Left cardiac atrium (tissue), 4 donors: ENCODE measurements at regions of chr3 and their contacts with region 1.

Region 1: DNA sequence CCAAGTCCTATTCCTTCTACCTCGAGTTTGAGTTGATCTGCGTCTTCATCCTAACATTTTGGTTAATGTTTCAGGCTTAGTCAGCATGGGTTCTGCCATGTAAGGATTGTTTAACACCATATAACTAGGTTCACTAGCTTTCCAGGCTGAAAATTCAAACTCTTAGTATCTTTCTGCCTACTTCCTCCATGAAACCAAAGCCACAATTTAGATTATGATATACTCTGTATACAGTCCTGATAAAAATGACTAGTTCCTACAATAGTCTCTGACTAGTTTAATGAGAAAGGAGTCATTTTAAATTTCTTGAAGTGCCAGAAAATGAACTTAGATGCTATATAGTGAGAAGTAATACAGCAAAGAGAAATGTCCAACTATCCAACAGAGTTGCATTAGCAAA is 6.6 kb upstream of the BTLA start:
- DNase-seq: no peak
- ATAC-seq: no peak

Region 2: GRCh38 chr3:112132975-112133448 is 372.9 kb before region 1 on chr3 and contains the start of gene GCSAM:
- intact Hi-C with region 1: no loop called
- DNase-seq: peak; percentile 39
- ATAC-seq: peak; percentile 67 to 85
- total RNA-seq, gene GCSAM: 0.08 to 0.35 TPM

Region 3: GRCh38 chr3:112333002-112333380 is 172.9 kb before region 1 on chr3 and contains the start of gene CD200:
- intact Hi-C with region 1: loop called in 1 of 2 experiments (anchors 10 kb)
- DNase-seq: peak; percentile 62
- ATAC-seq: peak; percentile 84 to 85
- total RNA-seq, gene CD200: 5.8 to 6.7 TPM

Region 4: DNA sequence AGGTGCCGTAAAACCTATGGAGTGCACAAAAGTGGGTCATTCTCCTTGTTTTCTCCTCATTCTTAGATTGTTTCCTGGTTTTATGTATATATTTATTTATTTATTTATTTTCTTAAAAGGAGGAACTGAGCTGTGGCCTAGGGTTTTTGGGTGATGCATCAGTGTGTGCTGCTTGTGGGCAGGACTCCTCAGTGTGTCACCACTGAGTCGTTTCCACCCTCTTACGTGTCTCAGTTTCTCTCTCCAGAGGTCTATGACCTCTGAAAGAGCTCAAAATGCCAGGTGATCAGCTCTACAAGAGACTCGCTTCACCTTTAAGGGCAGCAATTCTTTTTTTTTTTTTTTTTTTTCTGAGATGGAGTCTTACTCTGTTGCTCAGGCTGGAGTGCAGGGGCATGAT is 100.1 kb before region 1 on chr3:
- intact Hi-C with region 1: no loop called
- DNase-seq: no peak
- ATAC-seq: no peak

Region 5: DNA sequence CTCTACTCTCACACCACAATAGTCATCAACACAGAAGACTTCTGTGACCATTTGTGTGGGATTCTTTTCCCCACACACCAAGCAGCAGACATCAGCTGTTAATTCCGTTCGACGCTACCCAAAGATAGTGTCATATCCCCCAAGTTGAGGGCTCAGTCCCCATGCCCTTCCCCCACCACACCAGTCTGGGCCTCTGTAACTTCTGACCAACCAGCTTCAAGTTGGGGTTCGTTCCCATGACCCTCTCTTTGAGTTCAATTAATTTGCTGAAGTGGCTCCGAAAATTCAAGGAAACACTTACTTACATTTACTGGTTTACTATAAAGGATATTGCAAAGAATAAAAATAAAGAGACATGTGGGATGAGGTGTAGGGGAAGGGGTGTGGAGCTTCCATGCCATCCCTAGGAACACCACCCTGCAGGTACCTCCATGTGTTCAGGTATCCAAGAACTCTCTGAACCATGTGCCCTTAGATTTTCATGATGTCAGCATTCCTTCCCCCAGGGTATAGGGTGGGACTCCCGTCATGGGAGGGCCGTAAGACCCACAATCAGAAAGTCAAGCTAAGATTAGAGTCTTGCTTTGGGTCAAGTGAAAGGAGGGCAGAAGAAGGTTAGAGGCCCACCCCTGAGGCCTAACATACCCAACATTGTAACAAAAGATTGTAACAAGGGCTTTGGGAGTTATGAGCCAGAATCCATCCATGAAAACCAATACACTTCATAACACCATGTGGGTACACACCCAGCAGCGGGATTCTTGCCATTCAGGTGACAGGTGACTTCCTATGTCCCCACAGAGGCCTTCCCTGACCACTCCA is 89.3 kb before region 1 on chr3:
- intact Hi-C with region 1: no loop called
- DNase-seq: no peak
- ATAC-seq: no peak